IMR-90 (cell line): ENCODE measurements at regions of chr4 and their contacts with region 1.

Region 1: GRCh38 chr4:75800972-75801371 is 76.6 kb downstream of the USO1 start:
- DNase-seq: peak; percentile 56
- ATAC-seq: peak; percentile 59; the same call in 1 of the 2 replicates
- H3K4me3 ChIP-seq: no peak overlapping the region
- H3K27ac ChIP-seq: no peak overlapping the region
- H3K4me1 ChIP-seq: no peaks in the 10 kb centered on the region; the same call in 1 of the 2 replicates
- H3K27me3 ChIP-seq: no peaks in the 10 kb centered on the region
- CTCF ChIP-seq: no peak
- POLR2A ChIP-seq: no peak
- RAD21 ChIP-seq: no peak

Region 2: GRCh38 chr4:75469896-75470295 is 331.1 kb before region 1 on chr4:
- CTCF ChIA-PET with region 1: no interaction called
- POLR2A ChIA-PET with region 1: no interaction called
- dilution Hi-C with region 1: no loop called
- in situ Hi-C with region 1: no loop called
- intact Hi-C with region 1: no loop called
- DNase-seq: no peak
- ATAC-seq: no peak
- H3K4me3 ChIP-seq: no peak overlapping the region
- H3K27ac ChIP-seq: no peak overlapping the region
- H3K4me1 ChIP-seq: no peaks in the 10 kb centered on the region
- H3K27me3 ChIP-seq: no peaks in the 10 kb centered on the region
- CTCF ChIP-seq: no peak
- POLR2A ChIP-seq: no peak
- RAD21 ChIP-seq: no peak

Region 3: DNA sequence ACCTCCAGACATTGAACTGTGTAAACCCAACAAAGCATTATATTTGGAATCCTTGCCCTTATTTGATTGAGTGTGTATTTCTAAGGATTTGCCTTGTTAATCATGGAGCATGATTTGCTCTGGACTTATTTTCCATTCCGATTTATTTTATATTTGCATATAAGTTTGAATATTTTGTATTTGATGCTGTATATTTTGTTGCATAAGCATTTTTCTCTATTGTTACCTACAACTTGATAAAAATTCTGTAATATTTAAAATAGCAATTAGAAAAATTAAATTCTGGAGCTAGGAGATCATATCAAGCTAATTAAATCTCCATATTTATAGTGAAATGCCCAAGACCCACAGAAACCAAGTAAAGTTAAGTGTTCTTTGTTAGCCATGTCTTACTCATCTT is 29.4 kb before region 1 on chr4:
- CTCF ChIA-PET with region 1: no interaction called
- POLR2A ChIA-PET with region 1: no interaction called
- dilution Hi-C with region 1: no loop called
- in situ Hi-C with region 1: no loop called
- intact Hi-C with region 1: loop called (anchors 5 kb)
- DNase-seq: no peak
- ATAC-seq: no peak
- H3K4me3 ChIP-seq: no peak overlapping the region
- H3K27ac ChIP-seq: no peak overlapping the region
- H3K4me1 ChIP-seq: peaks cover 3% of the 10 kb centered on the region; the same call in 1 of the 2 replicates
- H3K27me3 ChIP-seq: no peaks in the 10 kb centered on the region
- CTCF ChIP-seq: no peak
- POLR2A ChIP-seq: no peak
- RAD21 ChIP-seq: no peak

Region 4: DNA sequence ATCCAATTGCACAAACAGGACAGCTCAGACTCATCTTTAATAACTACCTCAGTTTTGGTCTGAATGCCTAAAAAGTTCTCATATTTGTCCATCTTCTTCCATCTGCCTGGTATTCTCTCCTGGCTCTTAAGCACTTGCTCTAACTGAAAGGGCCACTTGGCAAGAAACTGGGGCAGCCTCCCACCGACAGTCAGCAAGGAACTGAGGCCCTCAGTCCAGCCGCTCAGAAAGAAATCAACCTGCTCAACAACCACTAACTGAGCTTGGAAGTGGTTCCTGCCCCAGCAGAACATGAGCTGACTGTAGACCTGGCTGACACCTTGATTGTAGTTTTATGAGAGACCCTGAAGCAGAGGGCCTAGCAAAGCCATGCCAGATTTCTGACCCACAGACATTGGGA is 16.9 kb after region 1 on chr4:
- CTCF ChIA-PET with region 1: no interaction called
- POLR2A ChIA-PET with region 1: no interaction called
- dilution Hi-C with region 1: no loop called
- in situ Hi-C with region 1: no loop called
- intact Hi-C with region 1: loop called (anchors 2 kb)
- DNase-seq: no peak
- ATAC-seq: no peak
- H3K4me3 ChIP-seq: no peak overlapping the region
- H3K27ac ChIP-seq: no peak overlapping the region
- H3K4me1 ChIP-seq: no peaks in the 10 kb centered on the region
- H3K27me3 ChIP-seq: no peaks in the 10 kb centered on the region
- CTCF ChIP-seq: no peak
- POLR2A ChIP-seq: no peak
- RAD21 ChIP-seq: no peak